ENCODE measurements at regions of chr6 and their contacts with region 1.

Region 1: DNA sequence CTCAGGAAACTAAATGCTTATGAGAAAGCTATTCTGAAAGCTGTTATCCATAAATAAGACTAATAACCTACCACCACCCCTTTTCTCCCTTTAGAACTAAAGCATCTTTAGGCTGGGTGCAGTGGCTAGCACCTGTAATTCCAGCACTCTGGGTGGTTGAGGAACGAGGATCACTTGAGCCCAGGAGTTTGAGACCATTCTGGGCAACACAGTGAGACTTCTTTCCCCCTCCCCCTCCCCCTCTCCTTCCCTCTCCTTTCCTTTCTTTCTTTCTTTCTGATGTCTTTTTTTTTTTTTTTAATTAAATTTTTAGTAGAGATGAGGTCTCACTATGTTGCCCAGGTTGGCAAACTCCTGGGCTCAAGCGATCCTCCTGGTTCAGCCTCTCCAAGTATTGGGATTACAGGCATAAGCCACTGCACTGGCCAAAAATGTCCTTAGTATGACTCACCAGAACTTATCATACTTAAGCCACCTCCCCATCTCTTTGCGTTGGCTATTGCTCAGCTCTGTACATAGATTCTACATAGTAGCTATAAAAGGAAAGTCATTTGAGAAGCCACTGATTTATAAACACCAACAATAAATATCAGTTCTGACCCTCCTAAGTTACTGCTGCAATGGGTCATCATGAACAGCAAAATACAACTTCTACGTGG is 54.8 kb upstream of the SPDEF start:
- DNase-seq: no peak
- H3K4me3 Mint-ChIP-seq: no peak overlapping the region
- H3K27ac Mint-ChIP-seq: no peak overlapping the region
- H3K4me1 Mint-ChIP-seq: peaks cover 25% of the 10 kb centered on the region
- H3K27me3 Mint-ChIP-seq: no peaks in the 10 kb centered on the region

Region 2: DNA sequence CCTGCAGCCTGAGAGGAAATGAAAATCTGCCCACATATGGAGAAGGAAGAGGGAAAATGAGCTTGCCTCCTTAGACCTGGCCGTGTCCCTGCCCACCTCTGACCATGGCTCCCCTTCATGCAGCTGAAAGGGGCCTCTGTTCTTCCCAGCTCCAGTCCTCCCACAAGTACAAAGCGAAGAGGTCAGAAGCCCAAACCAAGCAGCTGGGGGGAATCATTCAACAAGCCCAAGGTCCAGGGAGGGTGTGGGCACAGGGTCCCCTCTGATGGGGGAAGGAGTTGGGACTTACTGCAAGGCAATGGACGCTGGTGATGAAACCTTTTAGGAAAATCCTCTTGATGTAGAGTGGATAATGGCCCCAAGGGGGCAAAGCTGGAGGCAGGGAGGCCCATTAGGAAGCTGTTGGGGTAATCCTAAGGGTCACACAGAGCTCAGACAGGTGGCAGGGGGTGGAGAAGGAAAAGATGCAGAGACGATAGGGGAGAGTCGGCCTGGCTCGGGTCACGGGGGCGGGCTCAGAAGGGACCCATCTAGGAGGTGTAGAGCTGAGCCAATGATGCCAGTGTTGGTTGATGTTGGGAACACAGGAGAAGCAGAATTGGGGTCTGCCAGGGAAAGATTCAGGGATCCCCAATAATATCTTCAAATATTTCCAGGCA is 449.0 kb before region 1 on chr6:
- CTCF ChIA-PET with region 1: interaction called, 12 read pairs
- POLR2A ChIA-PET with region 1: no interaction called
- DNase-seq: no peak
- H3K4me3 Mint-ChIP-seq: no peak overlapping the region
- H3K27ac Mint-ChIP-seq: no peak overlapping the region
- H3K4me1 Mint-ChIP-seq: no peaks in the 10 kb centered on the region
- H3K27me3 Mint-ChIP-seq: peaks cover 28% of the 10 kb centered on the region

Region 3: DNA sequence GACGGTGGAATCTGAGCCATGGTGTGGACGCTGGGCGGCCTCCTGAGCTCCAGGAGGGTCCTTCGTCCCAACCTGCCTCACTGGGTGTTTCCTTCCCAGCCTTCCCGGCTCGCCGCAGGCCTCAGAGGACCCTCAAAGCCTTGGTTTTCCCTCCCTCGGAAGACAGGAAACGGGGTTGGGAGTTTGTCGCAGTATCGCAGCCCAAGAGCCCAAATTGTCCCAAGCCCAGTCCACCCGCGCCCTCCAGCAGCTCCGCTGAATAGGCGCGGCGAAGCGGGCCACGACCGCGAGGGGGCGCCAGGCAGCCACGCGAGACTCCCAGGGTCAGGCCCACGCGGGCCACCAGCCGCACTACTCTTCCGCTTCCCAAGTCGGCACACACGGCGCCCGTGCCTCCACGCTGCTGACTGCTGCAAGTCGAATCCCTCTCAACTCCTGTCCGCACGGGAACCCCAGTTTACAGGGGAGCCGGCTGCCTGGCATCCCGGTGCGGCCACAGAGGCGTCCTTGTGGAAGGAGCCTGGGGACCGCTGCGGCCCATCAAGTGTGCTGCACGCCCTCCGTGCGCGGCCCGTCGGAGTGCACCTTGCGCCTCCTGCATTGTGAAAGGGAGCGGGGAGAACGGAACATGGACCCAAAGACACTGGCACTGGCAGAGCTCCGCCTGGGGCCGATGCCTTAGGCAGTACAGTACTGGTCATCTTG is 414.7 kb before region 1 on chr6:
- CTCF ChIA-PET with region 1: interaction called, 19 read pairs
- POLR2A ChIA-PET with region 1: no interaction called
- DNase-seq: peak; percentile 87
- H3K4me3 Mint-ChIP-seq: peak overlapping the region; percentile 73
- H3K27ac Mint-ChIP-seq: no peak overlapping the region
- H3K4me1 Mint-ChIP-seq: peaks cover 3% of the 10 kb centered on the region
- H3K27me3 Mint-ChIP-seq: peaks cover 11% of the 10 kb centered on the region

Region 4: GRCh38 chr6:34459899-34460593 is 150.9 kb before region 1 on chr6:
- CTCF ChIA-PET with region 1: interaction called, 79 read pairs
- POLR2A ChIA-PET with region 1: interaction called, 6 read pairs
- DNase-seq: peak; percentile 59
- H3K4me3 Mint-ChIP-seq: no peak overlapping the region
- H3K27ac Mint-ChIP-seq: no peak overlapping the region
- H3K4me1 Mint-ChIP-seq: no peaks in the 10 kb centered on the region
- H3K27me3 Mint-ChIP-seq: peaks cover 16% of the 10 kb centered on the region

Region 5: DNA sequence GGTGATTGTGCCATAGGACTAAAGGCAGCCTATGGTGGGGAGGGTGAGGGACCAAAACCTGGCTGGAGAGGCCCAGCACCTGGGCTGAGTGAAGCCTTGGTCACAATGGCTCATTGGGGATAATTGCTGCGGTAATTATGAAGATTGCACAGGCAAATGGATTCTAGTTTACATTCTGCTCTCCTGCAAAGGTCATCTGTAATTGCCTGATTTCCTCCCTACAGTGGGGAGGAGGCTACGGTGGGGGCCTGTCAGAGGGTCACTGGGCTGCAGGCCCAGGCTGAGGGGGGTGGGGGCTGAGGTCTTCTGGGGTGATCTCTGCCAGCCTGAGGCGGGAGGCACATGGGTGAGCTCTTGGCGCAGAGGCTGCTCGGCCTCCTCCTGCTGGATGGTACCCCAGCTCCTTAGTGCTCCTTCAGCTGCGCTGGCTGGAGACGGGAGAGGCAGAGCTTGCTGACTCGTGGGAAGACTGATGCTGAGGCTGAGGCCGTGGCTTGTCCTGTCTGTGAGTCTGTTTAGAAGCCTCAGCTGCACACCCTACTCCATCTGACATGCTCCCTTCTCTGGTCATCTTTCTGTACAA is 114.8 kb before region 1 on chr6:
- CTCF ChIA-PET with region 1: no interaction called
- POLR2A ChIA-PET with region 1: no interaction called
- DNase-seq: no peak
- H3K4me3 Mint-ChIP-seq: no peak overlapping the region
- H3K27ac Mint-ChIP-seq: no peak overlapping the region
- H3K4me1 Mint-ChIP-seq: no peaks in the 10 kb centered on the region
- H3K27me3 Mint-ChIP-seq: peaks cover 2% of the 10 kb centered on the region

Region 6: DNA sequence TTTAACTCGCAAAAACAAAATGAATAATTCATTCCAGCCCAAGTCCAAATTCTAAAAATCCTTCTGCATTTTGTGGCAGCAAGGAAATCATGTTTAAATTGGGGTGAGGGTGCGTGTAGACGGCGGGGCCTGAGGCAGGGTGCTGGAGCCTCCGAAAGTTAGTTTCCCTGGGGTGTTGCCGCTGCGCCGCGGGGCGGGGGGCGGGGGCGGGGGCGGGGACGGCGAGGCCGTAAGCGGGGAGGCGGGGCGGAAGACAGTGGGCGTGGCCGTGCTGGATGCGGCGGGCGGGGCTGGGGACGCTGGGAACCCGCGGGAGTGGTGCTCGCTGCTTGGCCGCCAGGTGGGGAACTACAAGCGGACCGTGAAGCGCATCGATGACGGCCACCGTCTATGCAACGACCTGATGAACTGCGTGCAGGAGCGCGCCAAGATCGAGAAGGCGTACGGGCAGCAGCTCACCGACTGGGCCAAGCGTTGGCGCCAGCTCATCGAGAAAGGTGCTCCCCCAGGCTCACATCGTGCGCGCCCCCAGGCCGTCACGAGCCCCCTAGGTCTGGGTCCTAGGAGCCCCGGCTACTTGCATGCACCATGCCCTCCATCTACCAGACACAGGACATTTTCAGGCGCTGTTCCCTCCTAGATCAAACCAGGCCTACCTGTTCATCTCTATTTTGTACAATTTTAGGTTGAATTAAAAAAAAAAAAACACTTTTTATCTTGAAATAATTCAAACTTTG is 83.8 kb before region 1 on chr6:
- CTCF ChIA-PET with region 1: interaction called, 32 read pairs
- POLR2A ChIA-PET with region 1: no interaction called
- DNase-seq: peak; percentile 96
- H3K4me3 Mint-ChIP-seq: peak overlapping the region; percentile 26
- H3K27ac Mint-ChIP-seq: peak overlapping the region; percentile 52
- H3K4me1 Mint-ChIP-seq: peaks cover 10% of the 10 kb centered on the region
- H3K27me3 Mint-ChIP-seq: peaks cover 5% of the 10 kb centered on the region

Region 7: GRCh38 chr6:34593701-34594100 is 17.2 kb before region 1 on chr6:
- CTCF ChIA-PET with region 1: interaction called, 18 read pairs
- POLR2A ChIA-PET with region 1: interaction called, 4 read pairs
- DNase-seq: no peak
- H3K4me3 Mint-ChIP-seq: no peak overlapping the region
- H3K27ac Mint-ChIP-seq: no peak overlapping the region
- H3K4me1 Mint-ChIP-seq: peaks cover 14% of the 10 kb centered on the region
- H3K27me3 Mint-ChIP-seq: no peaks in the 10 kb centered on the region

Region 8: GRCh38 chr6:34656378-34657036 is 45.6 kb after region 1 on chr6:
- CTCF ChIA-PET with region 1: interaction called, 11 read pairs
- POLR2A ChIA-PET with region 1: interaction called, 9 read pairs
- DNase-seq: peak; percentile 47
- H3K4me3 Mint-ChIP-seq: peak overlapping the region; percentile 67
- H3K27ac Mint-ChIP-seq: peak overlapping the region; percentile 95
- H3K4me1 Mint-ChIP-seq: peaks cover 53% of the 10 kb centered on the region
- H3K27me3 Mint-ChIP-seq: no peaks in the 10 kb centered on the region